ENCODE measurements at regions of chr6 and their contacts with region 1.

Region 1: DNA sequence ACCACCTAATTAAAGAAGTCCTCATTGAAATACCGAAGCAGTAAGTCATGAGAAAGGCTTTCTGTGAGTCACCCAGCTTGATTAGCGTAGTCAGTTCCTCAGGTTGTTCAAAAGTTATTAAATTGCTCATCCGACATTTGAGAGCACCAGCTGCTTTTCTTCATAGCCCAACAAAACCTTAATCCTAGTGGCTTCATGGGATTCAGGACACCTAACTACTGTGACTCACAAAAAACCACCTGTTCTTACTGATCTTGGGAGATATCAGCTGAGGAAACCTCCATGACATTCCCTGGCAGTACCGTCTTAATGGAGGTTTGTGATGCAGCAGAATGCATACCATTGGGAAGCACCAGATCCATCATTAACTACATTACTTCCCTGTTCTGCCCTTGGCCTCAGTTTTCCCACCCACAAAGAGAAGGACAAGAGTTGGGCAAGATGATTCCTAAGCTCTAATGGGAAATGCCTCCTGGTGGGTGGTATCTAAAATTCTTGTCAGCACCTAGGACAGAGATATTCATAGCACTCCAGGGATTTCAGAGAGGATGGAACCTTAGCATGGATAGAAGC is 103.8 kb downstream of the KHDC1L start:
- DNase-seq: peak; percentile 61
- H3K4me3 ChIP-seq: no peak overlapping the region
- H3K27ac ChIP-seq: no peak overlapping the region
- H3K4me1 ChIP-seq: no peaks in the 10 kb centered on the region
- H3K27me3 ChIP-seq: no peaks in the 10 kb centered on the region
- CTCF ChIP-seq: no peak

Region 2: GRCh38 chr6:71649915-71650314 is 1471.6 kb before region 1 on chr6:
- CTCF ChIA-PET with region 1: no interaction called
- POLR2A ChIA-PET with region 1: no interaction called
- intact Hi-C with region 1: no loop called
- DNase-seq: no peak
- H3K4me3 ChIP-seq: no peak overlapping the region
- H3K27ac ChIP-seq: no peak overlapping the region
- H3K4me1 ChIP-seq: no peaks in the 10 kb centered on the region
- H3K27me3 ChIP-seq: no peaks in the 10 kb centered on the region
- CTCF ChIP-seq: no peak

Region 3: DNA sequence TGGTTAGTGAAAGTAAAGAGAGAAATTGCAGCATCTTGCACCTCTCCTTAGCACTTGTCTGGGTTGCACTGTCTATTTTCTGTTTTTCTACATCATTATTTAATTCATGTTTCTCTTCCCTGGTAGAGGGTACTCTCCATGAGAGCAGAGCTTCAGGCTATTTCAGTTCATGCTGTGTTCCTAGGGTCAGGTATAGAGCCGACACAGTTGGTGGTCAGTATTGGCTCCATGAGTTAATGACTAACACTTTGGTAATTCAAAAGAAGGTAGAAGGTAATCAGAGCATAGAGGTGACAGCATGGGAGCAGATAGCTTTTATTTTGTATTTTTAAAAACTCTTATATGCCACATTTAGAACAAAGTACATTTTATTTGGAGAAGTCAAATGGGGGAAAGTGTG is 1192.5 kb before region 1 on chr6:
- CTCF ChIA-PET with region 1: no interaction called
- POLR2A ChIA-PET with region 1: no interaction called
- intact Hi-C with region 1: no loop called
- DNase-seq: no peak
- H3K4me3 ChIP-seq: no peak overlapping the region
- H3K27ac ChIP-seq: no peak overlapping the region
- H3K4me1 ChIP-seq: no peaks in the 10 kb centered on the region
- H3K27me3 ChIP-seq: no peaks in the 10 kb centered on the region
- CTCF ChIP-seq: no peak

Region 4: GRCh38 chr6:72206606-72207005 is 914.9 kb before region 1 on chr6:
- CTCF ChIA-PET with region 1: no interaction called
- POLR2A ChIA-PET with region 1: no interaction called
- intact Hi-C with region 1: no loop called
- DNase-seq: no peak
- H3K4me3 ChIP-seq: no peak overlapping the region
- H3K27ac ChIP-seq: no peak overlapping the region
- H3K4me1 ChIP-seq: peaks cover 7% of the 10 kb centered on the region
- H3K27me3 ChIP-seq: no peaks in the 10 kb centered on the region
- CTCF ChIP-seq: no peak

Region 5: GRCh38 chr6:72636215-72636614 is 485.3 kb before region 1 on chr6:
- CTCF ChIA-PET with region 1: no interaction called
- POLR2A ChIA-PET with region 1: interaction called, 12 read pairs
- intact Hi-C with region 1: no loop called
- DNase-seq: no peak
- H3K4me3 ChIP-seq: no peak overlapping the region
- H3K27ac ChIP-seq: no peak overlapping the region
- H3K4me1 ChIP-seq: peaks cover 48% of the 10 kb centered on the region
- H3K27me3 ChIP-seq: no peaks in the 10 kb centered on the region
- CTCF ChIP-seq: no peak

Region 6: DNA sequence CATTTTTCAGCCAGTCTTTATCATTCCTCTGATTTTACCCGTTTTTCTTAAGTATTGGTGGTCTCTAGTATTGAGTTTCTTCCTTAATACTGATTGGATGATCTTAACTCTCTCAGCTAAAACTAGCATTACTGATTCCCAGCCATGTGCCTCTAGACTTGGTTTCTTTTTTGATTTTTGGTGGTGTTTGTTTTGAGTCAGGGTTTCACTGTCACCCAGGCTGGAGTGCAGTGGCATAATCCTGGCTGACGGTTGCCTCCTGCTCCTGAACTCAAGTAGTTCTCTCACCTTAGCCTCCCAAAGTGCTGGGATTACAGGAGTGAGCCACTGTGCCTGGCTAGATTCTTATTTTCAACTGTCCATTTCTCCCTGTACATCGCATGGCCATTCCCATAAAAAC is 207.7 kb after region 1 on chr6:
- CTCF ChIA-PET with region 1: no interaction called
- POLR2A ChIA-PET with region 1: no interaction called
- intact Hi-C with region 1: no loop called
- DNase-seq: no peak
- H3K4me3 ChIP-seq: no peak overlapping the region
- H3K27ac ChIP-seq: no peak overlapping the region
- H3K4me1 ChIP-seq: no peaks in the 10 kb centered on the region
- H3K27me3 ChIP-seq: no peaks in the 10 kb centered on the region
- CTCF ChIP-seq: no peak